ENCODE measurements at regions of chr17 and their contacts with region 1.

Region 1: DNA sequence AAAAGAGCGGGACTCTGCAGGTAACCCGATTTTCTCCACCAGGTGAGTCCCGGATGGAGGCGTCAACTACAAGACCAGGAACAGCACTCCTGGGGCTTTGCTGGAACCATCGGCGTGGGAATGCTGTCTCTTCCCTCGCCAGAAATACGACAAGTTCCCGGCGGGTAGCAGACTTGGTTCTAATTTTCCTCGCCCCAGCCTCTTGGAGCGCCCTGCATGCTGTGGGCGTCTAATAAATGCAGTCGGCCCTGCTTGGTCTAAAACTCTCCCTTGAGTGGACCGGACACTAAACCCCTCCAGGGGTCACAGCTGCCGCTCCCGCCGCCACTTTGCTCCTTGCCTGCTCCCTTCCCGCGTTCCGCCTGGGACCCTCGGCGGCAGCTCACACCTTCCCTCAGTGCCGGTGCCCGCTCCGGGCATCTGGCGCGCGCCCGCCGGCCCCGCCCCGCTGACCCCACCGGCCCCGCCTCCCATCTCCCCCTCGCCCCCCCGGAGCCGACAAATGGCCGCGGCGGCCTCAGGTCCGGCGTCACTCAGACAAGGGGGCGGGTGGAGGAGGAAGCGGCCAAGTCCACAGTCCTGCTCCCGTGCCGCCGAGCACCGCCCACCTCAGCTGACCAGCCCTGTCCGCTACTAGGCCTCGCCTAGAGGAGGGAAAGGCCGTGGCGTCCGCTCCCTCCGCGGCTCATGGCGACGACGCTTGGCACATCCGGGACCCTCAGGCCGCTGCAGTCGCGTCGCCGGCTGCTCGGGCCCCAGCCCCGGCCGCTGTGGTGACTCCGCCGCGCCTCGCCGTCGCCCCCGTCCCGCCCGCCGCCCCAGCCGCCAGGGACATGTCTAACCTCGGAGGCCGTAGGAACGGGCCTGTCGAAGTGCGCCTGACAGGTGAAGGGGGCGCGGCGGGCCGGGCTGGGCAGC is 65.8 kb downstream of the KPNA2 start:
- DNase-seq: peak; percentile 89
- H3K4me3 ChIP-seq: peak overlapping the region; percentile 48 to 88 (median 54)
- H3K27ac ChIP-seq: peak overlapping the region; percentile 27
- H3K4me1 ChIP-seq: no peaks in the 10 kb centered on the region
- H3K27me3 ChIP-seq: no peaks in the 10 kb centered on the region
- CTCF ChIP-seq: no peak
- POLR2A ChIP-seq: peak; percentile 74

Region 2: DNA sequence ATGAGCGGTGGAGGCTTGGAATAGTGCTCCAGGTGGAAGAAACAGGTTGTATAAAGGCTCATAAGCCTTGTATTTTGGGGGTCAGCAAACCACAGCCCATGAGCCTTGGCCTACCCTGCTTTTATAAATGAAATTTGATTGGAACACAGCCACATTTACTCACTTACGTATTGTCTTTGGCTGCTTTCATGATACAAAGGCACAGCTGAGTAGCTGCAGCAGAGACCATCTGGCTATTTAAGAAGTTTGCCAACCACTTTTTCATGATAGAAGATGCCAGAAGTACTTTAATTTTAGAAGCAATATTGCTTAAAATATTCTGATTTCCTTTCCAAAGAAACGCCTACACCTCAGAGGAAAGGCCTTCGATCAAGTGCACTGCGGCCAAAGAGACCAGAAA is 178.8 kb before region 1 on chr17:
- CTCF ChIA-PET with region 1: no interaction called
- POLR2A ChIA-PET with region 1: no interaction called
- dilution Hi-C with region 1: no loop called
- intact Hi-C with region 1: loop called (anchors 1 kb)
- DNase-seq: no peak
- H3K4me3 ChIP-seq: no peak overlapping the region
- H3K27ac ChIP-seq: no peak overlapping the region
- H3K4me1 ChIP-seq: no peaks in the 10 kb centered on the region
- H3K27me3 ChIP-seq: no peaks in the 10 kb centered on the region
- CTCF ChIP-seq: no peak
- POLR2A ChIP-seq: no peak

Region 3: GRCh38 chr17:68074279-68074678 is 27.1 kb before region 1 on chr17:
- CTCF ChIA-PET with region 1: no interaction called
- POLR2A ChIA-PET with region 1: no interaction called
- dilution Hi-C with region 1: no loop called
- intact Hi-C with region 1: loop called (anchors 1 kb)
- DNase-seq: no peak
- H3K4me3 ChIP-seq: no peak overlapping the region
- H3K27ac ChIP-seq: no peak overlapping the region
- H3K4me1 ChIP-seq: peaks cover 8% of the 10 kb centered on the region
- H3K27me3 ChIP-seq: no peaks in the 10 kb centered on the region
- CTCF ChIP-seq: no peak
- POLR2A ChIP-seq: no peak

Region 4: DNA sequence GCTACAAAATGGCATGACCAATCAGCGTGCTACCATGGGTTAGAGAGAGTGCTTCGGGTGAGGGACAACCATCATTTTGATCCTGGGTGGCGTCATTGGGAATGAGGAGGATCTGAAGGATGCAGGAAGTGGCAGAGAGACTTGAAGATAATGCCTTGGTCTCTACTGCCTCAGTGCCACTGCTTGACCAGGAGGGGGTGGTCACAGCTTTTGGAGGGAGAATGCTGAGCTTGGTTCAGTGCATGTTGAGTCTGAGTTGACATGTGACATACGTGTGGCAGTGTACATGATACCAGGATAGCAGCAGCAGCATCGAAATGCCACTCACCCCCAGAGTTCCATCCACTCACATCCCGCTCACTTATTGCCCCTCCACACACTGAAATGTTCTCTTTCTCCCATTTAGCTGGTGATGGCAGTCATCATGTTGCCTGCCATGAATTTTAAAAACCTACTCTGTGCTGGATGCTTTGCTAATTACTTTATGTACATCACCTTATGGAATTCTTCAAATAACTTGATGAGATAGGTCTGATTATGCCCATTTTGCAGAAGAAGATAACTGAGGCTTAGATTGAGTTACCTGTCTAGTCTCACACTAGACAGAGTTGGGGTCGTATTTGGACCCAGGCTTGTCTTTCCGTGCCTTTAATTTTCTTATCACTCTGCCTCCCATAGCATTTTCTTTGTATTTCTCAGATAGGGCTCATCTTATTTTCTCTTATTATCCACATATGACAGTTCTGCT is 226.7 kb after region 1 on chr17:
- CTCF ChIA-PET with region 1: no interaction called
- POLR2A ChIA-PET with region 1: no interaction called
- dilution Hi-C with region 1: no loop called
- intact Hi-C with region 1: no loop called
- DNase-seq: no peak
- H3K4me3 ChIP-seq: no peak overlapping the region
- H3K27ac ChIP-seq: no peak overlapping the region
- H3K4me1 ChIP-seq: no peaks in the 10 kb centered on the region
- H3K27me3 ChIP-seq: no peaks in the 10 kb centered on the region
- CTCF ChIP-seq: no peak
- POLR2A ChIP-seq: no peak